ENCODE measurements at regions of chr5 and their contacts with region 1.

Region 1: GRCh38 chr5:157761690-157762621 is 18.4 kb downstream of the LSM11 start:
- DNase-seq: peak in 3 of 9 experiments; percentile 18 to 62 (median 54)
- ATAC-seq: peak; percentile 84
- H3K4me3 ChIP-seq: no peak overlapping the region
- H3K4me3 Mint-ChIP-seq: no peak overlapping the region
- H3K27ac ChIP-seq: no peak overlapping the region
- H3K27ac Mint-ChIP-seq: no peak overlapping the region
- H3K4me1 ChIP-seq: no peaks in the 10 kb centered on the region
- H3K4me1 Mint-ChIP-seq: peaks cover 4% of the 10 kb centered on the region
- H3K27me3 ChIP-seq: no peaks in the 10 kb centered on the region
- H3K27me3 Mint-ChIP-seq: no peaks in the 10 kb centered on the region
- CTCF ChIP-seq: peak; percentile 77

Region 2: DNA sequence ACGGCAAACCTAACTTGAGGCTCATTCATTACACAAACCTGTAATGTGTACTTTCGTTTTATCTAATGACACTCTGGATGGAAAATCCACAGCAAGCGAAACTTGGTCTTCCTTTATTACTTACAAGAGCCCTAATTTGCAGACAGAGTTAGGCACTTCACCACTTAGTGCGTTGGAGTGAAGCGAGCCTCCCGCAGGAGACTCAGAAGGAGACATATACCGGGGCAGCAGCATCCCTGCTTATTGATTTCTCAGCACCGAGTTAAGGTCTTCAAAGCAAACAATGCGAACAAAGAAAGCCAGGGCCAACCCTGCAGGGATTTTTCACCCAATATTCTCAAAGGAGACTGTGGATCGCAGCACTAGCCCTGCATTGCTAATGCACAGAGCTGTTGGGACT is 10.2 kb after region 1 on chr5:
- CTCF ChIA-PET with region 1: interaction called, 17 read pairs
- POLR2A ChIA-PET with region 1: no interaction called
- intact Hi-C with region 1: no loop called
- DNase-seq: no peak
- ATAC-seq: no peak
- H3K4me3 ChIP-seq: no peak overlapping the region
- H3K4me3 Mint-ChIP-seq: no peak overlapping the region
- H3K27ac ChIP-seq: no peak overlapping the region
- H3K27ac Mint-ChIP-seq: no peak overlapping the region
- H3K4me1 ChIP-seq: no peaks in the 10 kb centered on the region
- H3K4me1 Mint-ChIP-seq: no peaks in the 10 kb centered on the region
- H3K27me3 ChIP-seq: peaks cover 0 to 3% of the 10 kb centered on the region in 2 experiments
- H3K27me3 Mint-ChIP-seq: peaks cover 14% of the 10 kb centered on the region
- CTCF ChIP-seq: no peak

Region 3: GRCh38 chr5:157994906-157995519 is 233.1 kb after region 1 on chr5:
- CTCF ChIA-PET with region 1: interaction called, 17 read pairs
- POLR2A ChIA-PET with region 1: no interaction called
- intact Hi-C with region 1: loop called in 1 of 2 experiments (anchors 5 kb)
- DNase-seq: peak in 7 of 9 experiments; percentile 13 to 64 (median 38)
- ATAC-seq: peak; percentile 71
- H3K4me3 ChIP-seq: no peak overlapping the region
- H3K4me3 Mint-ChIP-seq: no peak overlapping the region
- H3K27ac ChIP-seq: no peak overlapping the region
- H3K27ac Mint-ChIP-seq: no peak overlapping the region
- H3K4me1 ChIP-seq: peaks cover 15% of the 10 kb centered on the region
- H3K4me1 Mint-ChIP-seq: peaks cover 15% of the 10 kb centered on the region
- H3K27me3 ChIP-seq: peaks cover 7 to 17% of the 10 kb centered on the region in 2 experiments
- H3K27me3 Mint-ChIP-seq: peaks cover 31% of the 10 kb centered on the region
- CTCF ChIP-seq: peak; percentile 50

Measured in CD8-positive, alpha-beta T cell (primary cell).